ENCODE measurements at regions of chr19 and their contacts with region 1.

Region 1: GRCh38 chr19:17052439-17053210 is 22.6 kb downstream of the HAUS8 start:
- DNase-seq: peak in 40 of 42 donors; percentile 16 to 81 (median 52)

Region 2: GRCh38 chr19:16778796-16779411 is 273.7 kb before region 1 on chr19:
- intact Hi-C with region 1: loop called (anchors 5 kb)
- DNase-seq: peak; percentile 12 to 73 (median 44)

Region 3: GRCh38 chr19:17006579-17006978 is 46.0 kb before region 1 on chr19:
- intact Hi-C with region 1: no loop called
- DNase-seq: no peak

Region 4: DNA sequence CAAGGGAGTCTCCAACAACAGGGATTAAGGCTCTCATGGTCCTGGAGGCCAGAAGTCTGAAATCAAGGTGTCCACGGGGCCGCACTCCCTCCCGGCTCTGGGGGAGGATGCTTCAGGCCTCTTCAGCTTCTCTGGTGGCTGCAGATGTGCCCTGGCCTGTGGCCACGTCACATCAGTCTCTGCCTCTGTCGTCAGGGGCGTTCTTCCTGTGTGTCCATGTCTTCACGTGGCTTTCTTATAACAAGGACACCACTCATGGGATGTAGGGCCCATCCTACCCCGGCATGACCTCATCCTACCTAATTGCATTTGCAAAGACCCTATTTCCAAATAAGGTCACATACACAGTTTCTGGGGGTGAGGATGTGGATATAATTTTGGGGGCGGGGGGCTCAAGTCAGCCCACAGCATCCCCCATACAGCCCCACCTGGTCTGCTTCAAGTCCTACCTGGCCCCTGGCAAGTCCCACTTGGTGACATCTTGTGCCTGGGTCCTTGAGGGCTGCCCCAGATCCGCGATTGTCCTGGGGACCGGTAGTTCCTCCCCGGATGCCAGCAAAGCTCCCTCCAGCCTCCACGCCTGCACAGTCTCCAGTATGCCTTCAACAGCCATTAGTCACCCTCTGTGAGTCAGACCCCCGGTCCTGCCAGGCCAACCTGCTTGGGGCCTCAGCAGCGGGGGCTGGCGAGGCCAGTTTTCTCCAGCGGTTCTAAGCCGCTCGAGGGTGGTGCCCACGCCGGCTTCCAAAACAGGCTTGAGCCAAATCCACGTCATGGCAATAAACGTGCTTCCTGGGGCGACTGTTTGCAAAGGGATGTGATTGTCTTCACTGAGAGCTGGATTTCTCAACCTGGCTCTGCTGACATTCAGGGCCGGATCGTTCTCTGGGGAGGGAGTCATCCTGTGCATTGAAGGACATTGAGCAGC is 55.2 kb after region 1 on chr19:
- intact Hi-C with region 1: no loop called
- DNase-seq: peak in 25 of 42 donors; percentile 14 to 85 (median 45)

Region 5: GRCh38 chr19:17156927-17157302 is 104.3 kb after region 1 on chr19:
- intact Hi-C with region 1: no loop called
- DNase-seq: peak in 17 of 42 donors; percentile 12 to 55 (median 26)